ENCODE measurements at regions of chr14 and their contacts with region 1.

Region 1: GRCh38 chr14:34345718-34346465 is 116.1 kb downstream of the SPTSSA start:
- DNase-seq: no peak
- H3K4me3 ChIP-seq: no peak overlapping the region
- H3K27ac ChIP-seq: no peak overlapping the region
- H3K4me1 ChIP-seq: no peaks in the 10 kb centered on the region
- H3K27me3 ChIP-seq: no peaks in the 10 kb centered on the region
- CTCF ChIP-seq: no peak
- EP300 ChIP-seq: no peak
- POLR2A ChIP-seq: no peak
- RAD21 ChIP-seq: no peak

Region 2: GRCh38 chr14:34331728-34332623 is 13.9 kb before region 1 on chr14:
- CTCF ChIA-PET with region 1: interaction called, 12 read pairs
- POLR2A ChIA-PET with region 1: no interaction called
- DNase-seq: peak; percentile 29 to 86
- H3K4me3 ChIP-seq: no peak overlapping the region
- H3K27ac ChIP-seq: no peak overlapping the region
- H3K4me1 ChIP-seq: peaks cover 0 to 3% (median 0%) of the 10 kb centered on the region in 4 experiments; a peak in 2 of 7 replicates
- H3K27me3 ChIP-seq: no peaks in the 10 kb centered on the region
- CTCF ChIP-seq: peak; percentile 75 to 80 (median 76)
- EP300 ChIP-seq: peak in 1 of 2 experiments; percentile 14; a peak in 1 of 3 replicates
- POLR2A ChIP-seq: no peak
- RAD21 ChIP-seq: peak; percentile 72 to 83

Region 3: DNA sequence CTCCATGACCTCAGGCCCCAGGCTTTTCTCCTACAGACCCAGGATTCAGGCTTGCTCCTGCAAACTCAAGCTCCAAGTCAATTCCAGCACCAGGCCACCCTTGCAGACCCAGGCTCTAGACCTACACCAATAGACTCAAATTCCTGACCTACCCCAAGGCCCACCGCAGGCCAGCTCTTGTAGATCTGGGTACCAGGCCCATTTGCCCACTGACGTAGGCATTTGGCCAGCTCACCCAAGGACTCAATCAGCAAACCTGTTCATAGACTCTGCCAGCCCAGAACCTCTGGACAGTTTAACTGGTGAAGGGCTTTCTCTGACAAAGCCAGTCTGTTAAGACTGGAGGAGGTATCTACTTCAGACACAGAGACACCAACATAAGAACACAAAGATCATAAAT is 63.8 kb after region 1 on chr14:
- CTCF ChIA-PET with region 1: no interaction called
- POLR2A ChIA-PET with region 1: no interaction called
- DNase-seq: no peak
- H3K4me3 ChIP-seq: no peak overlapping the region
- H3K27ac ChIP-seq: no peak overlapping the region
- H3K4me1 ChIP-seq: no peaks in the 10 kb centered on the region
- H3K27me3 ChIP-seq: no peaks in the 10 kb centered on the region
- CTCF ChIP-seq: no peak
- EP300 ChIP-seq: no peak
- POLR2A ChIP-seq: no peak
- RAD21 ChIP-seq: no peak